Endothelial cell of umbilical vein (primary cell): ENCODE measurements at regions of chrX and their contacts with region 1.

Region 1: GRCh38 chrX:45505214-45505613 is 304.5 kb upstream of the DIPK2B start:
- DNase-seq: peak; percentile 92
- H3K4me3 ChIP-seq: no peak overlapping the region
- H3K27ac ChIP-seq: peak overlapping the region; percentile 96
- H3K4me1 ChIP-seq: peaks cover 35% of the 10 kb centered on the region
- H3K27me3 ChIP-seq: no peaks in the 10 kb centered on the region
- CTCF ChIP-seq: no peak
- POLR2A ChIP-seq: peak; percentile 36

Region 2: DNA sequence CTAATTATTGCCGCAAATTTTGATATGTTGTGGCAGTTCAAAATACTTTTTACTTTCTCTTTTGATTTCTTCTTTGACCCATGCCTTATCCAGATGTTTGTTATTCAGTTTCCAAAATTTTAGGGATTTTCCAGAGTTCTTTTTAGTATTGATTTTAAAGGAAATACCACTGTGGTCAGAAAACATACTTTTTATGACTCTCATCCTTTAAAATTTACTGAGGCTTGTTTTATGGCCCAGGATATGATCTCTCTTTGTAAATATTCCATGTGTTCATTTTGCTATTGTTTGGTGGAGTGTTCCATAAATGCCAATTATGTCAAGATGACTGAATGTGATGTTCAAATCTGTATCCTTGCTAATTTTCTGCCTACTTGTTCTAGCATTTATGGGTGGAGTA is 32.2 kb before region 1 on chrX:
- CTCF ChIA-PET with region 1: interaction called, 4 read pairs
- POLR2A ChIA-PET with region 1: no interaction called
- dilution Hi-C with region 1: no loop called
- intact Hi-C with region 1: loop called (anchors 1 kb)
- DNase-seq: peak; percentile 76
- H3K4me3 ChIP-seq: no peak overlapping the region
- H3K27ac ChIP-seq: peak overlapping the region; percentile 75
- H3K4me1 ChIP-seq: peaks cover 14% of the 10 kb centered on the region
- H3K27me3 ChIP-seq: no peaks in the 10 kb centered on the region
- CTCF ChIP-seq: no peak
- POLR2A ChIP-seq: no peak

Region 3: DNA sequence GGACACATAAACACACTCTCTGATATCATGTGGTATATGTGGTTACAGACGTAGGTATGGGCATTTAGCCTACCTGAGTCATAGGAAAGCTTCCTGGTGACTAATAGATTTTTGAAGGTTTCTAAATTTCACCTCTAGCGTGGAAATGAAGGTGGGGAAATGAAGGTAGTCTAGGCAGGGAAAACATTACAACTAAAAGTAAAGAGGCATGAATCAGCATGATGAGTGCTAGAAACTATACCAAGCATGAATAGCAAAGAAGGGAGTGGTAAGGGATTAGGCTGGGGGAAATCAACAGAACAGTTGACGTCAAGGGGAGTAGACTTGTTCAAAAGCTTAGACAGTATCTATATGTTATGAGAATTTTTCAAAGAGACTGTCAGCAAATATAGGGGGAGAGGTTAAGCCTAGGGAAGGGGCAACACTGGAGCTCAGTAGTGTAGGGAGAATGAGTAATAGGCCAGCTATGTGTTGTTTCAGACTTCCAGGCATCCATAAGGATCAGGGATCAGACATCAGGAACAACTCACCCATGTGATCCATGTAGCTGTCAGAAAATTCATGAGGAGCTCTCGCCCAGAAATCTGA is 25.3 kb before region 1 on chrX:
- CTCF ChIA-PET with region 1: interaction called, 10 read pairs
- POLR2A ChIA-PET with region 1: interaction called, 11 read pairs
- dilution Hi-C with region 1: no loop called
- intact Hi-C with region 1: loop called (anchors 1 kb)
- DNase-seq: peak; percentile 79
- H3K4me3 ChIP-seq: no peak overlapping the region
- H3K27ac ChIP-seq: peak overlapping the region; percentile 98
- H3K4me1 ChIP-seq: peaks cover 26% of the 10 kb centered on the region
- H3K27me3 ChIP-seq: no peaks in the 10 kb centered on the region
- CTCF ChIP-seq: no peak
- POLR2A ChIP-seq: no peak

Region 4: GRCh38 chrX:45571453-45571852 is 66.2 kb after region 1 on chrX:
- CTCF ChIA-PET with region 1: no interaction called
- POLR2A ChIA-PET with region 1: no interaction called
- dilution Hi-C with region 1: no loop called
- intact Hi-C with region 1: no loop called
- DNase-seq: no peak
- H3K4me3 ChIP-seq: no peak overlapping the region
- H3K27ac ChIP-seq: no peak overlapping the region
- H3K4me1 ChIP-seq: no peaks in the 10 kb centered on the region
- H3K27me3 ChIP-seq: no peaks in the 10 kb centered on the region
- CTCF ChIP-seq: no peak
- POLR2A ChIP-seq: no peak

Region 5: GRCh38 chrX:45584717-45585116 is 79.5 kb after region 1 on chrX:
- CTCF ChIA-PET with region 1: no interaction called
- POLR2A ChIA-PET with region 1: no interaction called
- dilution Hi-C with region 1: no loop called
- intact Hi-C with region 1: no loop called
- DNase-seq: no peak
- H3K4me3 ChIP-seq: no peak overlapping the region
- H3K27ac ChIP-seq: no peak overlapping the region
- H3K4me1 ChIP-seq: no peaks in the 10 kb centered on the region
- H3K27me3 ChIP-seq: no peaks in the 10 kb centered on the region
- CTCF ChIP-seq: no peak
- POLR2A ChIP-seq: no peak